Endothelial cell of umbilical vein (primary cell): ENCODE measurements at regions of chr4 and their contacts with region 1.

Region 1: DNA sequence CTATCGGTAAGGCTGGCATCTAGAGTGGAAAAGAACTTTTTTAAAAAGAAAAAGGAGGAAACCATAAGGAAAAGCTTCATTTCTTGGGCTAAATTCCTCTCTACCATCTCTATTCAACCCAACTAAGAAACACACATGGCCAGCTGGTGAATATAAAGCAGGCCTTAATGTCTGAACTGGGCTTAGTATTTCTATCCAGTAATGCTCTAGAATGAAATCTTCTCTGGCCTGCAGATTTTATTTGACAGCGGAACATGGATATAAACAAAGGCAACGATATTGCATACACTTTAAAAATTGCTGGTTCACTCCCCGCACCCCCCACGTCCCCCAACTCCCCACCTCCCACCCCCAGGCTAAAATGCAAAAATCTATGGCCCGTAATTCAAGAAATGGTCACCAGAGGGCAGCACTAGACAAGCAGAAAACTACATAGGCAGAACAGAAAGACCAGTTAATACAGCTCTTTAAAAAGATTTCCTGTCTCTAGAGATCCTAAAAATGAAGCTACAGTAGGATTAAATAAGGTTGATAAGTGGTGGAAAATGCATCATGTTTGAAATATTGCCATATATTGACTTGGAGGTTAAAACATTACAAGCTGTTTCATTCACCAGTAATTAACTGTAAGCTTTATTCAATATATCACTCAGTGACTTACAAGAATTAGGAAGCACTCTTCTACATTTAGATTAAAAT is 155.2 kb upstream of the GALNT7 start:
- DNase-seq: peak; percentile 68
- H3K4me3 ChIP-seq: no peak overlapping the region
- H3K27ac ChIP-seq: peak overlapping the region; percentile 52
- H3K4me1 ChIP-seq: peaks cover 12% of the 10 kb centered on the region
- H3K27me3 ChIP-seq: no peaks in the 10 kb centered on the region
- CTCF ChIP-seq: peak; percentile 25 to 45
- POLR2A ChIP-seq: no peak

Region 2: GRCh38 chr4:172996571-172997216 is 16.7 kb before region 1 on chr4:
- CTCF ChIA-PET with region 1: interaction called, 14 read pairs
- POLR2A ChIA-PET with region 1: no interaction called
- dilution Hi-C with region 1: no loop called
- intact Hi-C with region 1: no loop called
- DNase-seq: peak; percentile 51
- H3K4me3 ChIP-seq: no peak overlapping the region
- H3K27ac ChIP-seq: no peak overlapping the region
- H3K4me1 ChIP-seq: peaks cover 4% of the 10 kb centered on the region
- H3K27me3 ChIP-seq: peaks cover 0 to 2% of the 10 kb centered on the region in 2 experiments
- CTCF ChIP-seq: no peak
- POLR2A ChIP-seq: no peak

Region 3: DNA sequence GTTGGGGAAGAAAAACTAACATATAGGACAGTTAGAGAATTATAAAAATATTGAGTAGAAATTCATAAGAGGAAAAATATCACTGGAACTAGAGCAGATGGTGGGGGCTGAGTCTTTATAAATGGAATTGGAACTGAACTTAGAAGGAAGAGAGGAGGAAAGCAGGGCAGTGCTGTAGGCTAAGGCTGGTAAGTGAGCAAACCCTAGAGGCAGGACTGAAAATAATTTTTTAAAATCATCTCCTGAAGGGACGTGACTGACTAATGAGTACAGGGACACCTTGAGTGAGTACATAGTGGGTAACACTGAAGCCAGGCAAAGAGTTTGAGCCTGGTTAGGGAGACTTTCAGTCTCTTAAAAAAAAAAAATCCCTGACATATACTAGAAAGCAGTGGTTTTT is 218.5 kb after region 1 on chr4:
- CTCF ChIA-PET with region 1: interaction called, 14 read pairs
- POLR2A ChIA-PET with region 1: no interaction called
- dilution Hi-C with region 1: no loop called
- intact Hi-C with region 1: loop called (anchors 1 kb)
- DNase-seq: peak; percentile 79
- H3K4me3 ChIP-seq: no peak overlapping the region
- H3K27ac ChIP-seq: peak overlapping the region; percentile 6
- H3K4me1 ChIP-seq: peaks cover 9% of the 10 kb centered on the region
- H3K27me3 ChIP-seq: no peaks in the 10 kb centered on the region
- CTCF ChIP-seq: peak; percentile 10 to 39
- POLR2A ChIP-seq: no peak

Region 4: GRCh38 chr4:173264684-173265185 is 251.4 kb after region 1 on chr4:
- CTCF ChIA-PET with region 1: interaction called, 73 read pairs
- POLR2A ChIA-PET with region 1: no interaction called
- dilution Hi-C with region 1: no loop called
- intact Hi-C with region 1: no loop called
- DNase-seq: peak; percentile 61
- H3K4me3 ChIP-seq: no peak overlapping the region
- H3K27ac ChIP-seq: no peak overlapping the region
- H3K4me1 ChIP-seq: peaks cover 8% of the 10 kb centered on the region
- H3K27me3 ChIP-seq: no peaks in the 10 kb centered on the region
- CTCF ChIP-seq: no peak
- POLR2A ChIP-seq: no peak

Region 5: DNA sequence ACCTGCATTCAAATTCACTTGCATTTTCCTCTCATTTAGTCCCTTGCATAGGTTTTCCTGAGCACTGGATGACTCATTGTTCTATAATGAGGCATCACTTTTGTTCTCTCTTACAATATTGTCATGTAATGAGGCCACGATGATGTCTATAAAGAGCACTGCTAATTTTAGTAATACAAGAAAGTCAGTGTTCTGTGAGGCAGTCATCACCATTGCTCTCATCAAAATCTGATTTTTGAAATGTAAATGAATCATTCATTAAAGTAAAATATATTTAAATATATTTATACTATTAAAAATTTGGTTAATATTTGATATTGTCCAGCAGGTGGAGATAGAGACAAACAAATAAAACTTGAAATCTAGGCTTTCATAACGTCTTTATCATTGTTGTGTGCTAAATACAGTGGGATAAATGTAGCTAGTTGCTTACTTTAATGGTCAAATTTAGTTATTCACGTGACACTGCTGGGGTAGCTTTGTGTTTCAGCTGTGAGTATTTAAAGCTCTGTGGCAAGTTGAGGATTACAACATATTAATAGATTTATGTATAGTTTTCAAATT is 305.3 kb after region 1 on chr4:
- CTCF ChIA-PET with region 1: interaction called, 26 read pairs
- POLR2A ChIA-PET with region 1: no interaction called
- dilution Hi-C with region 1: no loop called
- intact Hi-C with region 1: loop called (anchors 1 kb)
- DNase-seq: peak; percentile 67
- H3K4me3 ChIP-seq: no peak overlapping the region
- H3K27ac ChIP-seq: peak overlapping the region; percentile 14
- H3K4me1 ChIP-seq: peaks cover 8% of the 10 kb centered on the region
- H3K27me3 ChIP-seq: no peaks in the 10 kb centered on the region
- CTCF ChIP-seq: peak in 1 of 2 donors; percentile 10
- POLR2A ChIP-seq: no peak

Region 6: DNA sequence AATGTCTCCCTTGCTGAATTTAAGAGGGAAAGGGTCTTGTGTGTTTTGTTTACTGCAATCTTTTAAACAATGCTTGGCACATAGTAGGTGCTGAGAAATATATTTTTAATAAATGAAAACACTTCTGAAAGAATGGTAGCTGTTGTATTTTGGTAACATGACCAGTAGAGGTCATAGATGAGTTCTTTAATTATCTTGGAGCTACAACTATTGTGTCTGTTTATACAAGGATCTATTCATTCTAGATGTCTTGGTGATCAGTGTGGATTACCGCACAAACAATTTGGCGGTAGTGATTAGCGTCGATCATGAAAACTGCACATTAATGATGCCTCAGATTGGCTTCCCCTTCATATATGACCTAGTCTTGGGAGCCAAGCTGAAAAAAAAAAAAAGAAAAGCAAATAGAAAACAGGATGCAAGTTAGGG is 407.0 kb after region 1 on chr4:
- CTCF ChIA-PET with region 1: interaction called, 15 read pairs
- POLR2A ChIA-PET with region 1: no interaction called
- dilution Hi-C with region 1: no loop called
- intact Hi-C with region 1: loop called (anchors 1 kb)
- DNase-seq: peak; percentile 49
- H3K4me3 ChIP-seq: no peak overlapping the region
- H3K27ac ChIP-seq: no peak overlapping the region
- H3K4me1 ChIP-seq: peaks cover 17% of the 10 kb centered on the region
- H3K27me3 ChIP-seq: no peaks in the 10 kb centered on the region
- CTCF ChIP-seq: peak; percentile 4 to 21
- POLR2A ChIP-seq: no peak

Region 7: GRCh38 chr4:173448603-173449379 is 435.4 kb after region 1 on chr4:
- CTCF ChIA-PET with region 1: no interaction called
- POLR2A ChIA-PET with region 1: no interaction called
- dilution Hi-C with region 1: no loop called
- intact Hi-C with region 1: no loop called
- DNase-seq: no peak
- H3K4me3 ChIP-seq: no peak overlapping the region
- H3K27ac ChIP-seq: no peak overlapping the region
- H3K4me1 ChIP-seq: no peaks in the 10 kb centered on the region
- H3K27me3 ChIP-seq: no peaks in the 10 kb centered on the region
- CTCF ChIP-seq: no peak
- POLR2A ChIP-seq: no peak